Calu3 (cell line): ENCODE measurements at regions of chr10 and their contacts with region 1.

Region 1: GRCh38 chr10:77721815-77722214 is 84.2 kb upstream of the KCNMA1 start:
- DNase-seq: no peak
- H3K4me3 Mint-ChIP-seq: no peak overlapping the region
- H3K27ac Mint-ChIP-seq: no peak overlapping the region
- H3K4me1 Mint-ChIP-seq: peaks cover 31% of the 10 kb centered on the region
- H3K27me3 Mint-ChIP-seq: no peaks in the 10 kb centered on the region
- CTCF ChIP-seq: no peak

Region 2: DNA sequence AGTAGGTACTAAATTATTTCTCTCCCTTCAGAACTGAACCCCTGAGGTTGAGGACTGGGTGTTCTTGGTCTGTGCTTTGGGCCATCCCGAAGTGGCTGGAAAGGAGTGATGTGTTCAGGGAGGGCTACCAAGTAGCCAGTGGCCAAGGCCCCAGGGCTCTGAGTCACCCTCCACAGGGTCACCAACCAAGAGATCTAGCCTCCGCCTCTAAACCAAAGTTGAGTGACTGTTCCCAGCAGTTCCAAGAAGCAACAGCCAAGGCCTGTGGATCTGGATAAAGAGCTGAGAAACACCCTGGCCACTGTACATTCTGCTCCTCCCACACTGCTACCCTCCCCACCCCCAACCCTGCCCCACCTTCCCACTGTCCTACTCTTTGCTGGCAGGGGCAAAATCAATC is 48.7 kb before region 1 on chr10:
- CTCF ChIA-PET with region 1: no interaction called
- intact Hi-C with region 1: no loop called
- DNase-seq: no peak
- H3K4me3 Mint-ChIP-seq: no peak overlapping the region
- H3K27ac Mint-ChIP-seq: no peak overlapping the region
- H3K4me1 Mint-ChIP-seq: peaks cover 8% of the 10 kb centered on the region
- H3K27me3 Mint-ChIP-seq: peaks cover 25% of the 10 kb centered on the region
- CTCF ChIP-seq: no peak

Region 3: DNA sequence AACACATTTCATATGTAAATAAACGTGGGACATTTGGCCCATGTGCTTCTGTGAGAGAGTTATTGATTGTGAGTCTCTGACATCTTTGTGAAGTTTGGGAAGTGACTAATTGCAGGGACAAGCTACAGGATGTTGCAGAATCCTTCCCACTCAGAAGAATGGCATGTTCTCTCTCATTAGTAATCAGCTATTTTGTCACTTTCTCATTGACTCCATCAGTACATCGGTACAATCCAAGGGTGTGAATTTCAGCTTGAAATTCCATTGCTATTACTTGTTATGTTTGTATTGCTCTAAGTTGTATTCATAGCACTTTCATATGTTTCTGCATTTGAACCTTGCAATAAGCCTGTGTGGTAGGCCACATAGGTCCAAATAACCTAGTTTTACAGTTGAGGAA is 15.8 kb after region 1 on chr10:
- CTCF ChIA-PET with region 1: interaction called, 4 read pairs
- intact Hi-C with region 1: loop called (anchors 2 kb)
- DNase-seq: peak; percentile 28
- H3K4me3 Mint-ChIP-seq: no peak overlapping the region
- H3K27ac Mint-ChIP-seq: peak overlapping the region; percentile 48
- H3K4me1 Mint-ChIP-seq: peaks cover 30% of the 10 kb centered on the region
- H3K27me3 Mint-ChIP-seq: no peaks in the 10 kb centered on the region
- CTCF ChIP-seq: no peak

Region 4: GRCh38 chr10:77756319-77757232 is 34.8 kb after region 1 on chr10:
- CTCF ChIA-PET with region 1: interaction called, 5 read pairs
- intact Hi-C with region 1: loop called (anchors 1 kb)
- DNase-seq: peak; percentile 64
- H3K4me3 Mint-ChIP-seq: no peak overlapping the region
- H3K27ac Mint-ChIP-seq: no peak overlapping the region
- H3K4me1 Mint-ChIP-seq: peaks cover 11% of the 10 kb centered on the region
- H3K27me3 Mint-ChIP-seq: no peaks in the 10 kb centered on the region
- CTCF ChIP-seq: peak; percentile 86

Region 5: DNA sequence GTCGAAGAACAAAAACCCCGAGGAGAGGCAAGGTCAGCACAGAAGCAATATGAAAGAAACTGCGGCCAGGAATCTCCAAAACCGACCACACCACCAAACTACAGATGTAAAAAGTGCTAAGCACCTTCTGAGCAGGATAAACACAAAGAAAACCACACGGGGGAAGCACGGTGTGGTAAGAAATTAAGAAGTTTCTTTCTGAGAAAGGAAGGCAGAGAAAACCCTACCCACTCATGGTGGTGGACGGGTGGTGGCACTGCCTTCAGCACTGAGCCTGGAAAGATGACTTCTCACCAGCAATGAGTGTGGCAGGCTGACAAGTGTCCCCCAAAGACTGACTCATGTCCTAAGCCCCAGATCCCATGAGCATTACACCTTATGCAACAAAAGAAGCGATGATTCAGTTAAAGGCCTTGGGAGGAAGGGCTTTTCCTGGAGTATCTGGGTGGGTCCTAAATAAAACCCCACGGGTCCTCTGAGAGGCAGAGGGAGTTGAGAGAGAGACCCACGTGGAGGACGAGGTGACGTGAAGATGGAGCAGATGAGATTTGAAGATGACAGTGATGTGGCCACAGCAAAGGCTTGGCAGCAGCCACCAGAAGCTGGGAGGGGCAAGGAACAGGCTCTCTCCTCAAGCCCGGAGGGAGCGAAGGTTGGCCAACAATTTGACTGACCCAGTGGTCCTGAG is 79.8 kb after region 1 on chr10:
- CTCF ChIA-PET with region 1: interaction called, 17 read pairs
- intact Hi-C with region 1: no loop called
- DNase-seq: no peak
- H3K4me3 Mint-ChIP-seq: no peak overlapping the region
- H3K27ac Mint-ChIP-seq: no peak overlapping the region
- H3K4me1 Mint-ChIP-seq: no peaks in the 10 kb centered on the region
- H3K27me3 Mint-ChIP-seq: no peaks in the 10 kb centered on the region
- CTCF ChIP-seq: no peak

Region 6: DNA sequence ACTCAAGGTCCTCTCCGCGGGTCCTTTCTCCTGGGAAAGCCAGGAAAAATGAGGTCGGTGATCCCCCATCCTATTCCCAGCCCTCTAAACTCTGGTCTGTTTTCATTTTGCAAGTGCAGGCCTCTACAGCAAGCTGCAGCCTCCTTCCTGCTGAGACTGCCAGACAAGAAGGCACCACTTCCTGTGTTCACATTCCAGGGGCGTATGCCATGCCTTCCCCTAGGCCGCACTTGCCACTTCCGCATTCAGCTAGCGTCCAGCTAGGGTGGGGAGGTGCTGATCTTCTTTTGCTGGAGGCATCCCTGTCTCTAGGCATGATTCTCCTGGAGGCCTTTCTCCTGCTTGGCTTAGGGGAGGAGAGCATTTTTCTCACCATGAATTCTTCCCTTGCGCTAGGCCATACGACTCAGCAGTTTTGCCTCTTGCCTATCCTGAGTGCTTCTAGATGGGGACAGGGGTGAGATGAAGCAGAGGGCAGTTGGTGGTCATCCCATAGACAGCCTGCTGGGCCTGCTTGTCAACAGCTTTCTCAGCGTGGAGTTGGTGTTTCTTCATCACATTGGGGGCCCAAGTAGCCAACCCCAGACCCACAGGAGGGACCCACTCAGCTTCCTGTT is 640.7 kb after region 1 on chr10:
- CTCF ChIA-PET with region 1: no interaction called
- intact Hi-C with region 1: no loop called
- DNase-seq: no peak
- H3K4me3 Mint-ChIP-seq: no peak overlapping the region
- H3K27ac Mint-ChIP-seq: no peak overlapping the region
- H3K4me1 Mint-ChIP-seq: no peaks in the 10 kb centered on the region
- H3K27me3 Mint-ChIP-seq: peaks cover 100% of the 10 kb centered on the region
- CTCF ChIP-seq: no peak